Right ventricle myocardium inferior (tissue), 1 donor: ENCODE measurements at regions of chr19 and their contacts with region 1.

Region 1: DNA sequence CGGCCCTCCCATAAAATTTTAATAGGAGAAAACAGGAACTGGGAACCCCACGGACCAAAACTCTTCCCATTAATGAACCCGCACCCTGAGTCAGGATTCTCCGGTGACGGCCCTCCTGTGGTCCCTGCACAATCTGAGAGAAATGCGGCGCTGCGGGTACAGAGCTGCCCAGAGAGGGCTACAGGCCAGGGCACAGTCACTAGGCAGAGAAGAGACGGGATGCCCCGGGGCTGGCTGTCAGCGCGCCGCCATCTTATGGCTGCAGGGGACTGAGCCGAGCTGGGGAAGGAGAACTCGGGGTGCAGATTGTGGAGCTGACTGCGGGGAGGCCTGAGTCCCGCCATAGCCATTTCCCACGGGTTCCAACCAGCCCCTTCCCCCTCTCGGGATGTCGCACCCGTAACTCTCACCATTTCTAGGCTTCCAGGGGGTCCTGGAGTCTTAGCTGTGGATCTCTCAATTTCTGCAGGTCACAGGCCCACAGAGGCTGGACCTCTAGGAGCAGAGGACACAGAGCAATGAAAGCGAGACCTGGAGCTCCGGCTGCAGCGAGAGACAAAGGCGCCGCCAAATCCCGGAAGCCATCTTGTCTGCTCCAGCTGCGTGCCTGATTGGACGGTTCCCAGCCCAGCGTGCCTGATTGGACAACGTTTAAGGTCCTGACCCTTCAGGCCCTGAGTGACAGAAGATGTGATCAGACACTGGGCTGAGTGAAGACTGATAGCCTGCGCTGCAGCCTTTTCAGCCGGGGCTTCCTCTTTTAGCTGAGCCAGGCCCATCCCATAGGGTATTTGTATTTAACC is at the start of gene ZNF675:
- DNase-seq: peak; percentile 96
- ATAC-seq: peak; percentile 97
- total RNA-seq, gene ZNF675: 4.4 TPM

Region 2: DNA sequence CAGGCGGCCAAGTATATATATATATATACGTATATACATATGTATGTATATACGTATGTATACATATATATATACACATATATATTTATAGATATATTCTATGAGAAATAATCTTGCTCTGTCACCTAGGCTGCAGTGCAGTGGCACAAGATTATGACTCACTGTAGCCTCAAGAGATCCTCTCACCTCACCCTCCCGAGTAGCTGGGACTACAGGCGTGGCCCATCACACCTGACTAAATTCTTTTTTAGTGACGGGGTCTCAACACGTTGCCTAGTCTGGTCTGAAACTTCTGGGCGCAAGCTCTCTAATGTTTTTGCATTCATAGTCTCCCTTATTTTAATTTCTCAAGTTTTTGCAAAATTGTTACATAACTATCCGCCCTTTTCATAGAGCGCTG is 362.3 kb before region 1 on chr19:
- intact Hi-C with region 1: no loop called
- DNase-seq: no peak
- ATAC-seq: no peak

Region 3: GRCh38 chr19:23762884-23763711 is 76.3 kb after region 1 on chr19:
- intact Hi-C with region 1: loop called (anchors 5 kb)
- DNase-seq: peak; percentile 89
- ATAC-seq: peak; percentile 93